Mammary epithelial cell (primary cell): ENCODE measurements at regions of chr5 and their contacts with region 1.

Region 1: DNA sequence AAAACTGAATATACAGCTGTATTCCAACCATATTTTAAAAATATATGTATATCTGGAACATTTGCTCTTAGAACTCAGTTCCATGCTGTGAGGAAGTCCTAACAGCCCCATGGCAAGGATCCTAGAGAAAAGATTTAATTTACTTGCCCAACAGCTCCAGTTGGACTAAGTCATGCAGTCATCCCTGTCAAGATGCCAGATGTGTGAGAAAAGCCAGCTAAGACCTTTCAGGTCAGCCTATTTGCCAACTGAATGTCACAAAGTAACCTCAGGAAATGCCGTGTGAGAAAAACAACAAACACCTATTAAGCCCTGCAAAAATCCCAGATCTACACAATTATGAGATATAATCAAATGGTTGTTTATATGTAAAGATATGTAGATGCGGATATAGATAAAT is 416.3 kb downstream of the NR2F1-AS1 start:
- DNase-seq: peak; percentile 59
- H3K4me3 ChIP-seq: no peak overlapping the region
- H3K27ac ChIP-seq: no peak overlapping the region
- H3K4me1 ChIP-seq: peaks cover 42% of the 10 kb centered on the region
- H3K27me3 ChIP-seq: no peaks in the 10 kb centered on the region
- CTCF ChIP-seq: no peak

Region 2: GRCh38 chr5:93189707-93190120 is 25.0 kb after region 1 on chr5:
- CTCF ChIA-PET with region 1: interaction called, 3 read pairs
- dilution Hi-C with region 1: no loop called
- in situ Hi-C with region 1: no loop called
- intact Hi-C with region 1: loop called (anchors 1 kb)
- DNase-seq: peak; percentile 98
- H3K4me3 ChIP-seq: no peak overlapping the region
- H3K27ac ChIP-seq: peak overlapping the region; percentile 18
- H3K4me1 ChIP-seq: peaks cover 61% of the 10 kb centered on the region
- H3K27me3 ChIP-seq: no peaks in the 10 kb centered on the region
- CTCF ChIP-seq: no peak

Region 3: DNA sequence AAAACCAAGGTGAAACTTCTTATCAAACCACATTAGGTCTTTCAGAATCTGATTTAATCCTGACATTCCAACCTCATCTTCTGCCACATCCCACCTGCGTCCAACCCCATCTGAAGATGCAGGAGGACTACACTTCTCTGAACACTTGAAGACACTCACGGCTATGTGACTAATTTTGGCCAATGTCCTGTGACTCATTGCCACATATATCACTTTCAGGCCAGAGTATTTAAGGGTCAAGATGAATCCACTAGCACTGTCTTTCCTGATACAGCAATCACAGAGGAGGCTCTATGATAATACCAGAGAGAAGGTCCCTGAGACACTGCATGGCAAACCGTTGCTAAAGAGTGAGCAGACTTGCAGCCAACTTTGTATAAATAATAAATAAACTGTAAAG is 92.9 kb after region 1 on chr5:
- CTCF ChIA-PET with region 1: no interaction called
- dilution Hi-C with region 1: no loop called
- in situ Hi-C with region 1: no loop called
- intact Hi-C with region 1: no loop called
- DNase-seq: no peak
- H3K4me3 ChIP-seq: no peak overlapping the region
- H3K27ac ChIP-seq: no peak overlapping the region
- H3K4me1 ChIP-seq: peaks cover 4% of the 10 kb centered on the region
- H3K27me3 ChIP-seq: no peaks in the 10 kb centered on the region
- CTCF ChIP-seq: no peak

Region 4: DNA sequence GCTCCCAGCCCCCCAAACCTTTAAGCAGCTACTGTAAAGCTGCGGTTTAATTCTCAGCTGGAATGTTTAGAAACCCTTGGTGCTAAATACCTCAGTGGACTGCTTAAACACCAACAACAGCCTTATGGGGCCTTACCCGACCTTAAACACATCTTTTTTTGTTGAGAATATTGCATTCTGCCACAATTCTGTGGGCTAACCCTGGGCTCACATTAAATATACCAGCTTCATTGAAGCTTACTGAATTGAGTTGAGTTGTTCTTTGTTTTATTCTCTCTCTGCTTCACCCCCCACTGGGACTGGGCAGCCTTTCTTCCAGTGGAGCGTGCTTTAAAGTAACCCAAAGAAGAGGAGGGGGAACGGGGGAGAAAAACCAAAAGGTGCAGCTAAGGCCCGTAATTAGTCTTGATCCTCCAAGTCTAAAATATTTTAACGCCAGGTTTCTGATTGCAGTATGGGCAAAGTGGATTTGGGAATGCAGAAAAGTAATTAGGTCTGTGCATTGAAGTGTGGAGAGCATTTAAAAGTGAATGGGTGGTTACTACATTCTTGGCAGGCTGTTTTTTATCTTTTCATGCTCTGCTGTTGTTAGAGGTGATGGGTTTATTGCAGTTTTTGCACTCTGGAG is 135.1 kb after region 1 on chr5:
- CTCF ChIA-PET with region 1: no interaction called
- dilution Hi-C with region 1: no loop called
- in situ Hi-C with region 1: no loop called
- intact Hi-C with region 1: loop called (anchors 10 kb)
- DNase-seq: no peak
- H3K4me3 ChIP-seq: no peak overlapping the region
- H3K27ac ChIP-seq: no peak overlapping the region
- H3K4me1 ChIP-seq: peaks cover 16% of the 10 kb centered on the region
- H3K27me3 ChIP-seq: no peaks in the 10 kb centered on the region
- CTCF ChIP-seq: no peak

Region 5: DNA sequence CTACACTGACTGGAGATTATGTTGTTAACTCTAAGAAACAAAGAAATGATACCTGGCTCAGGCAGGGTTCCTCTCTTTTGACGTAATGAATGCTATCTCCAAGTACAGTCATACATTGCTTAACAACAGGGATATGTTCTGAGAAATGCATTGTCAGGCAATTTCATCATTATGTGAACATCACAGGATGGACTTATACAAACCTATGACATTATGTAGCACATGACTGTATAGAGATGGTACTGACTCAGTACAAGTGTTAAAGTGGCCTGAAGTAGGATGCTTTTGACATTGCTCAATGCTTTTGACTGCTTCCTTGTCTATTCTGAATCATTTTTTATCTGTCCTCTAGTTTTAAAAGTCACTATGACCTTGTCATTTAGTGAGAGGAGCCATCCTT is 268.7 kb after region 1 on chr5:
- CTCF ChIA-PET with region 1: no interaction called
- dilution Hi-C with region 1: no loop called
- in situ Hi-C with region 1: no loop called
- intact Hi-C with region 1: loop called (anchors 1 kb)
- DNase-seq: peak; percentile 85
- H3K4me3 ChIP-seq: no peak overlapping the region
- H3K27ac ChIP-seq: no peak overlapping the region
- H3K4me1 ChIP-seq: no peaks in the 10 kb centered on the region
- H3K27me3 ChIP-seq: no peaks in the 10 kb centered on the region
- CTCF ChIP-seq: no peak